ENCODE measurements at regions of chr12 and their contacts with region 1.

Region 1: GRCh38 chr12:95582230-95583058 is 31.2 kb upstream of the USP44 start:
- DNase-seq: no peak
- H3K4me3 ChIP-seq: no peak overlapping the region
- H3K27ac ChIP-seq: no peak overlapping the region
- H3K4me1 ChIP-seq: no peaks in the 10 kb centered on the region
- H3K27me3 ChIP-seq: no peaks in the 10 kb centered on the region
- CTCF ChIP-seq: peak in 2 of 3 experiments; percentile 23 to 31
- POLR2A ChIP-seq: no peak

Region 2: GRCh38 chr12:95633049-95633545 is 50.7 kb after region 1 on chr12:
- intact Hi-C with region 1: no loop called
- DNase-seq: no peak
- H3K4me3 ChIP-seq: no peak overlapping the region
- H3K27ac ChIP-seq: peak overlapping the region; percentile 40
- H3K4me1 ChIP-seq: peaks cover 24% of the 10 kb centered on the region
- H3K27me3 ChIP-seq: no peaks in the 10 kb centered on the region
- CTCF ChIP-seq: no peak
- POLR2A ChIP-seq: no peak

Region 3: DNA sequence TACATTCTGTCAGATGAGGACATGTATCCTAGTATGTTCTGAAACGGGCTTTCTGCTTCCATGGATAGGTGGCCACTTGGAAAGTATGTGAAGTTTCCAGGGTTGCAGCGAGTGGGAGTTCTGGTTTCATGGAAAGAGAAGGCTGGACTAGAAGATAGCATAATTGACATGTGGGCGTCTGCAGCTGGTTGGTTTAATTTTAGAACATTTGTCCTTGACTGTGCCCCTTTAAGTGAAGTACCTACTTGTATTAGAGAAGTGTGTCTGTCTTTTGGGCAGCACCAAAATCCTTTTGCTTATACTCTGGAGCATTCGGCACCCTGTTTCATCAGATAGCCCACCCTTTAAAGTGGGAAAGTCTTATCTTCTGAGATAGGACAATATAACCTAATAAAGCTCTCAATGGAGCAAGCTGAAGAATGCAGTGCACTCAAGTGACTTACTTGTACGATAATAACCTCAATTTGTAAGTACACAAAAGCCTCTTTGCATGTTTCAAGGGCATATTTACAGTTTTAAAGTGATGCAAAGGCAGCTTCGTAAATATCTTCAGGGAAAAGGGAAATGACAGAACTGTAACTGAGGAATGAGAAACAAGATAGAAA is 172.9 kb after region 1 on chr12:
- intact Hi-C with region 1: no loop called
- DNase-seq: no peak
- H3K4me3 ChIP-seq: no peak overlapping the region
- H3K27ac ChIP-seq: no peak overlapping the region
- H3K4me1 ChIP-seq: no peaks in the 10 kb centered on the region
- H3K27me3 ChIP-seq: no peaks in the 10 kb centered on the region
- CTCF ChIP-seq: no peak
- POLR2A ChIP-seq: no peak

Region 4: GRCh38 chr12:95815635-95816212 is 233.3 kb after region 1 on chr12:
- intact Hi-C with region 1: loop called (anchors 5 kb)
- DNase-seq: no peak
- H3K4me3 ChIP-seq: no peak overlapping the region
- H3K27ac ChIP-seq: no peak overlapping the region
- H3K4me1 ChIP-seq: no peaks in the 10 kb centered on the region
- H3K27me3 ChIP-seq: no peaks in the 10 kb centered on the region
- CTCF ChIP-seq: peak; percentile 45 to 76 (median 64)
- POLR2A ChIP-seq: no peak